ENCODE measurements at regions of chr1 and their contacts with region 1.

Region 1: DNA sequence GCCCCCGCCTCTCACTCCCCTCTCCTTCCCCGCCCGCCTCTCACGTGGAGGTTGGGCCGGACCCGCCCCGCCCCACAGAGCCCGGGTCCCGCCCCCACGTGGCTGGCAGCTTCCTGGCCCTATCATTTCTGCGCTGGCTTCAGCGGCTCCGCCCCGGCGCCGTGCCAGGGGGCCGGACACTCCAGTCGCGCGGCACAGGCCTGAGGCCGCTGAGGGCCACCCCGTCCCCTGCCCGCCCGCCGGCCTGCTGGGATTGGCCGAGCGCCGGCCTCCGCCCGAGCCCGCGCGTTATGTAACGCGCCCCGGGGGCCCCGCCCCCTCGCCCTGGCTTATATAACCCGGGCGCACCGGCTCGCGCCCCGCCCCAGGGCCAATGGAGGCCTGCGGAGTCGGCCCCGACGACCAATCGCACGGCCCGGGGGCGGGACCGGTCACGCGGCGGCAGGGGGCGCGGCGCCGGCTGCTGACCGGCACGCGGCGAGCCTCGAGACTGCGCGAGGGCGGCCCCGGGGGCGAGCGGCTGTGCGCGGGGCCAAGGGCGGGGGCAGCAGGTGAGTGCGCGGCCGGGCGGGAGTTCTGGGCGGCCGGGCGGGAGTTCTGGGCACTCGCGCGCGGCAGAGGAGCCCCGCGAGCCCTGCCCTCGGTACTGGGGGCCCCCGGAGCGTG is at the start of gene PER3:
- DNase-seq: peak; percentile 98
- H3K4me3 ChIP-seq: peak within 1 kb of the TSS; percentile 37 to 65 (median 60)
- H3K27ac ChIP-seq: peak within 1 kb of the TSS; percentile 35
- H3K4me1 ChIP-seq: peaks cover 6% of the 10 kb centered on the region
- H3K27me3 ChIP-seq: no peaks in the 10 kb centered on the region
- CTCF ChIP-seq: no peak
- POLR2A ChIP-seq: no peak
- total RNA-seq, gene PER3: 2.6 and 3.6 TPM in 2 replicates

Region 2: GRCh38 chr1:7760245-7760644 is 23.7 kb before region 1 on chr1:
- CTCF ChIA-PET with region 1: no interaction called
- POLR2A ChIA-PET with region 1: no interaction called
- dilution Hi-C with region 1: no loop called
- intact Hi-C with region 1: no loop called
- DNase-seq: peak; percentile 55
- H3K4me3 ChIP-seq: no peak overlapping the region
- H3K27ac ChIP-seq: peak overlapping the region; percentile 43
- H3K4me1 ChIP-seq: no peaks in the 10 kb centered on the region
- H3K27me3 ChIP-seq: no peaks in the 10 kb centered on the region
- CTCF ChIP-seq: no peak
- POLR2A ChIP-seq: no peak

Region 3: DNA sequence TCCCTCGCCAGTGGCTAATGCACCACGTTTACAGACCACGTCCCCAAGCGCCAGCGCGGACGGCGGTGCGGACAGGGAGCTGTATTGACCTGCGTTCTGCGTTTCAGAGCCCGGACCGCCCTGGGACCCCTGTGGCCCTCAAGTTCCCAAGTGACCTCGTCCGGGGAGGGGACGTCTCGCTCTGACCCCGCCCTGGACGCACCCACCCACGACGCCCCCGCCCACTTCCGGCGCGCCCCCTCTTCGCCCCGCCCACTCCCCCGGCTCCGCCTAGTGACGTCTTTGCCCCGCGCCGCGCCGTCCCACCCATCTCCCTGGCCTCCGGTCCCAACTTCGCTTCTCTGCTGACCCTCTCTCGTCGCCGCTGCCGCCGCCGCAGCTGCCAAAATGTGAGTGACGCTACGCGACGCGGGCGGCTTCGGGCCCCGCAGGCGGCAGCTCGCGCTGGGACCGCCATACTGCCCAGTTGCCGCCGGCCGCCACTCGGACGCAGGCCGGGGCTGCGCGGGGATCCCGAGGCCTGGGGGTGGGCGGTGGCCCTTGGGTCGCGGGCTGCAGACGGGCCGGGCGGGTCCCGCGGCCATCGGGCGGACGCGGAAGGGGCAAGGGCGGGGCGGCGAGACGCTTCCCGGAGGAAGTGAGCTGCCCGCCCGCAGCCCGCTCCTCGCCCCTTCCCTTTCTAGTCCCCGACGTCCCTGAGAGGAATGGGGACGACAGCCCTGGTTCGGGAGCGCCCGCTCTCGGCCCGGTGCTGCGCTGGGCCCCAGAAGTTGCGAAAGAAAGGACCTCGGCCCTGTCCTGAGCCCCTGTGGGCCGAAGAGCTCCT is 12.7 kb before region 1 on chr1 and contains the start of gene VAMP3:
- CTCF ChIA-PET with region 1: no interaction called
- POLR2A ChIA-PET with region 1: no interaction called
- dilution Hi-C with region 1: no loop called
- intact Hi-C with region 1: loop called (anchors 1 kb)
- DNase-seq: peak; percentile 83
- H3K4me3 ChIP-seq: peak within 1 kb of the TSS; percentile 86 to 99 (median 96)
- H3K27ac ChIP-seq: peak within 1 kb of the TSS; percentile 74
- H3K4me1 ChIP-seq: peaks cover 12% of the 10 kb centered on the region
- H3K27me3 ChIP-seq: no peaks in the 10 kb centered on the region
- CTCF ChIP-seq: no peak
- POLR2A ChIP-seq: peak; percentile 70
- total RNA-seq, gene VAMP3: 137 and 148 TPM in 2 replicates

Region 4: DNA sequence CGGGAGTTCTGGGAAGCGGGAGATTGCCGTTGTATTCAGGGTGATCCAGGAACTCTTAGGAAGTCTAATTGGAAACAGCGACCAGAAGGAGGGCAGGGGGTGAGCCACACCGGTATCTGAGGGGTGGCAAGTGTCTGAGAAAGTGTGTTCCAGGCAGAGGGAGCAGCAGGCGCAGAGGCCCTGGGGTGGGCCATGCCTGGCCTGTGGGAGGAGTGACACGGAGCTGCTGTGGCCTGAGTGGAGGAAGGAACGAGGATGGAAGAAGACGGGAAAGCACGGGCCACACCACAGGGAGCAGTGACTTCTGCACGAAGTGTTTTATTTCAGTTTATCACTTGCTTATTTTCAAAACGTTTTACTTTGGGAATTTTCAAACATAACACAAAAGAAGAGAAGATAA is 11.4 kb after region 1 on chr1:
- CTCF ChIA-PET with region 1: no interaction called
- POLR2A ChIA-PET with region 1: interaction called, 12 read pairs
- dilution Hi-C with region 1: no loop called
- intact Hi-C with region 1: no loop called
- DNase-seq: no peak
- H3K4me3 ChIP-seq: no peak overlapping the region
- H3K27ac ChIP-seq: no peak overlapping the region
- H3K4me1 ChIP-seq: no peaks in the 10 kb centered on the region
- H3K27me3 ChIP-seq: no peaks in the 10 kb centered on the region
- CTCF ChIP-seq: no peak
- POLR2A ChIP-seq: no peak

Region 5: GRCh38 chr1:7961216-7962015 is 177.5 kb after region 1 on chr1 and contains the start of gene PARK7:
- CTCF ChIA-PET with region 1: no interaction called
- POLR2A ChIA-PET with region 1: interaction called, 5 read pairs
- dilution Hi-C with region 1: no loop called
- intact Hi-C with region 1: loop called (anchors 5 kb)
- DNase-seq: peak; percentile 100
- H3K4me3 ChIP-seq: peak within 1 kb of the TSS; percentile 60 to 91 (median 81)
- H3K27ac ChIP-seq: peak within 1 kb of the TSS; percentile 82
- H3K4me1 ChIP-seq: peaks cover 14% of the 10 kb centered on the region
- H3K27me3 ChIP-seq: no peaks in the 10 kb centered on the region
- CTCF ChIP-seq: peak; percentile 22 to 64
- POLR2A ChIP-seq: peak; percentile 99
- total RNA-seq, gene PARK7: 289 and 294 TPM in 2 replicates

Measured in endothelial cell of umbilical vein (primary cell).